ENCODE measurements at regions of chr1 and their contacts with region 1.

Region 1: DNA sequence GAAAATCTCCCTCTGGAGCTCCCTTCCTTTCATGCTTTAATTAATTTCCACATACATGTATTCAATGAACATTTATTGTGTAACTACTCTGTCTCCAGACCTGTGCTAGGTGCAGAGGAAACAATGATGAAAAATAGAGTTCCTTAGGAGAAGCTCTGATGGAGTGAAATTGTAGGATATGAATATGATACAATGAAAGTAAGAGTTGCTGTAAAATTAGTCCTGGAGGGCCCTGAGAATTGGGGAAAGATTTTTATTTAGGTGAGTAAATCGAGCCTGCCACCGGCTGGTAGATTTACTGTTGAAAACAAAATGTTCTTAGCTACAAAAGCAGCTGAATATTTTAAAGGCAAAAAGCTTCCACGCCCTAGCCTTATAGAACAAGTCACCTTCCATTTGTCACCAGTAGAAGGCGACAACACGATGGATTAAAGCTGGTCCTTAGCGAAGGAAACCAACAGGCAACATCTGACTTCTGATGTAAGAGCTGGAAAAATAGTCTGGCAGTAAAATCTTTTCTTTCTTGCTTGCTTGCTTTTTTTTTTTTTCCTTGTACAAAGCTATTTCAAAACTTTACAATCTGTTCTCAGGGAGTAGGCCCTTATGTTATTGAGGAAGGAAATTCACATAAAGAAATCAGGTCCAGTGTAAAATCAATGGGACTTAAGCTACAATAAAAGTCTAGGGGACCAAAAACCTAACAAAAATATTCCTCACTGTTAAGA is 82.0 kb upstream of the ROR1 start:
- DNase-seq: peak in 2 of 5 donors; percentile 53 to 56
- ATAC-seq: peak; percentile 74 to 87 (median 84)
- H3K4me3 ChIP-seq: no peak overlapping the region
- H3K27ac ChIP-seq: peak overlapping the region in 8 of 12 donors; percentile 27 to 79 (median 50)
- H3K4me1 ChIP-seq: peaks cover 0 to 20% (median 6%) of the 10 kb centered on the region in 12 donors
- H3K27me3 ChIP-seq: no peaks in the 10 kb centered on the region
- CTCF ChIP-seq: peak; percentile 45 to 82 (median 71)
- POLR2A ChIP-seq: no peak

Region 2: DNA sequence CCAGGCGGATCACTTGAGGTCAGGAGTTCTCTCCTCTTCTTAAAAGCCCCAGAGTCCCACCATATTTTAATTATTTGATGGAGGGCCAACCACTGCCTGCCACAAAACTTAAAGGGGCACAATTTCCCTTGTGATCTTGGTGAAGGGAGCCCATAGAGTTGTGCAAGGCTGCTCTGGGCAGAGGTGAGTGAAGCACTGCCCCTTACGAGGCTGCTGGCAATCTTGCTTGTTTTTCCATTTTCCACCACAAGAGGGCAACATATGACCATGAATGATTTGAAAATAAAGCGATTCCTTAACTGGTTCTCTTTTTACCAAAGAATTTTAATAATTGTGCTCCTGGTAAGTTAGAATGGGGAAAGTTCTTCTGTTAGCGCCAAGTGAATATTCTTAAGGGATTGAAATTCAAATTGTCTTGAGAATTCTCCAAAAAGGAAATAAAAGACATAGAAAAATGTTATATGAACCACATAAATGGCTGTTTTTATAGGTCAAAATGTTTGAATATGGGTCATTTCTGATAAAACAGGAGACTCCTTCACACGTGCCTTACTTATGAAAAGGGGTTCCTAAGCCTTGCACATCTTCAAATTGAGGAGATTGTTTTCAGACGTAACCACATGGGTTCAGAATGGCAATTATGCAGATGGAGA is 76.0 kb before region 1 on chr1:
- intact Hi-C with region 1: loop called in 1 of 10 experiments (anchors 5 kb)
- DNase-seq: peak in 3 of 5 donors; percentile 34 to 51 (median 45)
- ATAC-seq: peak; percentile 31 to 70 (median 60)
- H3K4me3 ChIP-seq: no peak overlapping the region
- H3K27ac ChIP-seq: peak overlapping the region in 2 of 12 donors; percentile 2 to 4
- H3K4me1 ChIP-seq: peaks cover 0 to 32% (median 4%) of the 10 kb centered on the region in 12 donors
- H3K27me3 ChIP-seq: no peaks in the 10 kb centered on the region
- CTCF ChIP-seq: peak; percentile 71 to 89 (median 78)
- POLR2A ChIP-seq: no peak

Region 3: DNA sequence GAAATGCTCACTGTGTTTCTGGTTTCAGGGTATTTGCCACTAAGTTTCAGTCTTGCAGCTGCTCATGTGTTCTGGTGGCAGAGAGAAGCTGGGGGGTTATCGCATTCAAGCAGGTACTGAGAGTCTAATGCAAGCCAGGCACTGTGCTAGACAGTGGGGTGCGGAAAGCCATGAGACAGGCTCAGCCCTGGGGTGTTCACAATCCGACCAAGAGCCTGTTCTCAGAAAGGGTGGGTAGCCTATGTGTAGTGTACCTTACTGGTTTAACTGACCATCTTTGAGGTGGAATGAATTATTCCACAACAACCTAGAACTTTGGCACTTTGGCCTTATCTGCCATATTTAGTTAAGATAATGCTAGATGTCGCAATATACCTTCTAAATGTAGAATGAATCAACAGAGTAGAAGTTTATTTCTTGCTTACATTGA is 26.7 kb after region 1 on chr1:
- intact Hi-C with region 1: no loop called
- DNase-seq: no peak
- ATAC-seq: no peak
- H3K4me3 ChIP-seq: no peak overlapping the region
- H3K27ac ChIP-seq: no peak overlapping the region
- H3K4me1 ChIP-seq: peaks cover 0 to 10% (median 0%) of the 10 kb centered on the region in 12 donors
- H3K27me3 ChIP-seq: no peaks in the 10 kb centered on the region
- CTCF ChIP-seq: no peak
- POLR2A ChIP-seq: no peak

Region 4: GRCh38 chr1:63731117-63732043 is 39.5 kb after region 1 on chr1:
- intact Hi-C with region 1: no loop called
- DNase-seq: peak in 1 of 5 donors; percentile 31
- ATAC-seq: peak in 3 of 4 donors; percentile 34 to 67 (median 48)
- H3K4me3 ChIP-seq: peak overlapping the region in 1 of 12 donors; percentile 18
- H3K27ac ChIP-seq: no peak overlapping the region
- H3K4me1 ChIP-seq: peaks cover 0 to 9% (median 0%) of the 10 kb centered on the region in 12 donors
- H3K27me3 ChIP-seq: no peaks in the 10 kb centered on the region
- CTCF ChIP-seq: no peak
- POLR2A ChIP-seq: no peak

Region 5: GRCh38 chr1:63787875-63788274 is 96.0 kb after region 1 on chr1:
- intact Hi-C with region 1: loop called in 1 of 10 experiments (anchors 5 kb)
- DNase-seq: peak in 4 of 5 donors; percentile 44 to 67 (median 51)
- ATAC-seq: peak; percentile 44 to 79 (median 71)
- H3K4me3 ChIP-seq: no peak overlapping the region
- H3K27ac ChIP-seq: peak overlapping the region in 6 of 12 donors; percentile 14 to 69 (median 62)
- H3K4me1 ChIP-seq: peaks cover 0 to 75% (median 35%) of the 10 kb centered on the region in 12 donors
- H3K27me3 ChIP-seq: no peaks in the 10 kb centered on the region
- CTCF ChIP-seq: no peak
- POLR2A ChIP-seq: no peak

Region 6: GRCh38 chr1:63877816-63878215 is 186.0 kb after region 1 on chr1:
- intact Hi-C with region 1: loop called in 1 of 10 experiments (anchors 10 kb)
- DNase-seq: no peak
- ATAC-seq: peak in 2 of 4 donors; percentile 31
- H3K4me3 ChIP-seq: no peak overlapping the region
- H3K27ac ChIP-seq: no peak overlapping the region
- H3K4me1 ChIP-seq: peaks cover 0 to 70% (median 39%) of the 10 kb centered on the region in 12 donors
- H3K27me3 ChIP-seq: no peaks in the 10 kb centered on the region
- CTCF ChIP-seq: no peak
- POLR2A ChIP-seq: no peak

Region 7: DNA sequence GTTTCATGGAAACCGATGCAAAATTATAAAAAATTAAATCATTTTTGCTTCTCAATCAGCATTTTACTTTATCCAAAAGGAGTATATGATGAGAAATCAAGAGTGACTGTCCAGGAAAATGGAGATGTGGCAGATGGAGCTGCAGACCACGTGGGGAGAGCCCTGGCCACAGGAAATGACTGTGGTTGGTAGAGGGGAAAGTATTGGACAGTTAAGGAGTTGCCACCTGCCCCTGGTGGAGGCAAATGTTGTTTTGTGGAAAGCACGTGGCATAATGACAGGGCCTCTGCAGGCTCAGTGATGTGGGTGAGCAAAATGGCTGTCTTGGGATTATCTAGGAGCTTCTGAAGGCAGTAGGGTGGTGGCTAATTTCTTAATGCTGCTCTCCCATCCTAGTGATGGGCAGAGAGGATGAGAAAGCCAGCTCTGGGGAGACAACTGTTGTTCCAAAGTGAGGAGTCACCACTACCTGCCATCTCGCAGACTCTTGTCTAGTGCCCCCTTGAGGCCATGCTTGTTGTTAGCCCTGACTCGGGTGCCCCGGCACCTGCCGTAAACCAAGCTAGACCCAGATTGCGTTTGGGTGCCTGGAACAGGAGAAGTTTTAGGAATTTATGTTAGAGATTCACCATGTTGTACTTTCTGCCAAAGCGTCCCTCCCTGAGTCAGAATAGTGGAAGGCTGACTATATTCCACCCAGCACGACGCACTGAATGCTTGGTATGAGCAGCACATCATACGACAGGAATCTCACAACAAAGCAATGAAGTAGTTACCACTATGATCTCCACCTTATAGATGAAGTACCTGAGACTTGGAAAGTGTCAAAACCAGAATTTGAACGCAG is 225.9 kb after region 1 on chr1:
- intact Hi-C with region 1: loop called in 7 of 10 experiments (anchors 5 to 10 kb)
- DNase-seq: no peak
- ATAC-seq: no peak
- H3K4me3 ChIP-seq: no peak overlapping the region
- H3K27ac ChIP-seq: no peak overlapping the region
- H3K4me1 ChIP-seq: peaks cover 0 to 72% (median 19%) of the 10 kb centered on the region in 12 donors
- H3K27me3 ChIP-seq: no peaks in the 10 kb centered on the region
- CTCF ChIP-seq: peak in 3 of 12 donors; percentile 17 to 25 (median 18)
- POLR2A ChIP-seq: no peak

Region 8: GRCh38 chr1:64038965-64039926 is 347.4 kb after region 1 on chr1:
- intact Hi-C with region 1: loop called in 1 of 10 experiments (anchors 10 kb)
- DNase-seq: peak in 3 of 5 donors; percentile 31 to 37 (median 33)
- ATAC-seq: peak; percentile 46 to 78 (median 70)
- H3K4me3 ChIP-seq: no peak overlapping the region
- H3K27ac ChIP-seq: peak overlapping the region in 11 of 12 donors; percentile 8 to 88 (median 78)
- H3K4me1 ChIP-seq: peaks cover 0 to 57% (median 24%) of the 10 kb centered on the region in 12 donors
- H3K27me3 ChIP-seq: no peaks in the 10 kb centered on the region
- CTCF ChIP-seq: no peak
- POLR2A ChIP-seq: no peak

Region 9: GRCh38 chr1:64242895-64243756 is 551.3 kb after region 1 on chr1:
- intact Hi-C with region 1: loop called in 5 of 10 experiments (anchors 5 kb)
- DNase-seq: no peak
- ATAC-seq: peak in 1 of 4 donors; percentile 49
- H3K4me3 ChIP-seq: no peak overlapping the region
- H3K27ac ChIP-seq: no peak overlapping the region
- H3K4me1 ChIP-seq: peaks cover 0 to 16% (median 3%) of the 10 kb centered on the region in 12 donors
- H3K27me3 ChIP-seq: no peaks in the 10 kb centered on the region
- CTCF ChIP-seq: peak; percentile 13 to 58 (median 42)
- POLR2A ChIP-seq: no peak

Measured in heart left ventricle (tissue), 16 donors.